AG04450 (cell line): ENCODE measurements at regions of chr6 and their contacts with region 1.

Region 1: DNA sequence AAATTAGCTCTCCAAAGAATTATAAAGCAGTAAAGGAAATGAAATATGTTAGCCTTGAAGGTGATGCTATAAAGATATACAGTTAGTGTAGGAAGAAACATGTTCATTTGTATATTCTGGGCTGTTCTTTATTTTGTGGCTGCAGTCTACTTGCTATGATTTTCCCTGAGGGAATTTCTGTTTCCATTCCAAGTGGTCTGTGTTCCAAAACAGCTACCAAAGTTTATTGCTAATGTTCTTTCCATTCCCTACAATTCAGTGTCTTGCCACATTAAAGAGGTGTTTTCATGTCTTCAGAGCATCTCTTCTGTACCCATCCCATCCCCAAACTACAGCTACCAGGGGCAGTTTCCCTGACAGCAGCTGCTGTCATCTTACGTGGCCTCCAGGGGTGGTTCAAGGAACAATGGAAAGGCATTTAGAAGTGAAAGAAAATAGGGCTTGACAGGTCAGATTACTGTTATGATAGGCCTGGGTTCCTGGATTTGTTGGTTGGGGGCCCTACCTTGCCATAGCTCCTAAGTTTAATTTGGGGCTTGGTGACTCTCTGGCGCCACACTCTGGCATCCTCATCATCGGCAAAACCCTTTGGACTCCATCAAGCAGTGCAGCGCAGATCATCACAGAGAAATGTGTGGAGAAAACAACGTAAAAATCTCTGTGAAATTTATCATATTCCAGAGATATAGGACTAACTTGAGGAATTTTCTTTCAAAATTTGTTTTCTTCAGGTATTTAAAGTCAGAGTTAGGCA is 33.8 kb upstream of the AIG1 start:
- DNase-seq: no peak
- H3K4me3 ChIP-seq: no peak overlapping the region
- H3K27ac ChIP-seq: no peak overlapping the region
- H3K27me3 ChIP-seq: no peaks in the 10 kb centered on the region
- CTCF ChIP-seq: peak; percentile 59

Region 2: GRCh38 chr6:142692942-142693341 is 333.9 kb before region 1 on chr6:
- CTCF ChIA-PET with region 1: interaction called, 21 read pairs
- POLR2A ChIA-PET with region 1: no interaction called
- DNase-seq: peak; percentile 74
- H3K4me3 ChIP-seq: no peak overlapping the region; the same call in 1 of the 2 replicates
- H3K27ac ChIP-seq: peak overlapping the region; percentile 58
- H3K27me3 ChIP-seq: no peaks in the 10 kb centered on the region
- CTCF ChIP-seq: peak; percentile 95

Region 3: GRCh38 chr6:143223895-143224294 is 197.0 kb after region 1 on chr6:
- CTCF ChIA-PET with region 1: no interaction called
- POLR2A ChIA-PET with region 1: no interaction called
- DNase-seq: no peak
- H3K4me3 ChIP-seq: no peak overlapping the region
- H3K27ac ChIP-seq: no peak overlapping the region
- H3K27me3 ChIP-seq: no peaks in the 10 kb centered on the region
- CTCF ChIP-seq: no peak